ENCODE measurements at regions of chr14 and their contacts with region 1.

Region 1: GRCh38 chr14:67704484-67705089 is 2.9 kb downstream of the RDH12 start:
- DNase-seq: peak; percentile 73 to 74
- ATAC-seq: peak; percentile 93 to 99
- H3K4me3 ChIP-seq: no peak overlapping the region
- H3K27ac ChIP-seq: peak overlapping the region; percentile 19 to 53; a peak in 2 of 6 replicates
- H3K4me1 ChIP-seq: peaks cover 28% of the 10 kb centered on the region
- CTCF ChIP-seq: peak; percentile 94
- EP300 ChIP-seq: no peak
- POLR2A ChIP-seq: no peak
- RAD21 ChIP-seq: peak; percentile 91

Region 2: DNA sequence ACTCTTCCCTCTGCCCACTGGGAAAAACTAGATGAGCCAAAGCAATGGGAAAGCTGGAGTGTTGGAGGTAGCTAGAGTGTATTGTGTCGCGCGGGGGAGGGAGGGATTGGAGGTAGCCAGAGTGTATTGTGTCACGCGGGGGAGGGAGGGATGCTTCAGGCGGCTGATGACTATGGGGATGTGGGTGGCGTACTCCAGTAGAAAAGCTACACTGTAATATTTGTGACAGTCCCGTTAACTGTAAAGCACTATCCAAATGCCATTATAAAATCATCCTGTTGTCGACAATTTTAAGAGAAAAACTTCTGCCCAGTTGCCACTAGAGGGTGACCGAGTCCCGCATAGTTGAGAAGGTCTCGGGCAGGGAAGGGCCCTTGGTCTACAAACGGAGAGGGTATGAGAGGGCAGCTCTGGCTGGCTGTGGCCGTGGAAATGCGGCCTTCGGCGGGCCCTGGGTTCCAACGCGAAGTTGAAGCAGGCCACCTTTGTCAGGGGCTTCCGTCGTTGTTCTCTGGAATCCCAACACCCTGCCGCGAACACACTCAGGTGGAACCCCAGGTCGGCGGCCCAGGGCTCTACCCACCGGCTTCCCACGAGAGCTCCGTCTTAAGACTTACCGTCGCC is 277.5 kb before region 1 on chr14:
- CTCF ChIA-PET with region 1: interaction called, 39 read pairs
- POLR2A ChIA-PET with region 1: no interaction called
- DNase-seq: peak; percentile 85 to 91
- ATAC-seq: peak; percentile 85 to 94
- H3K4me3 ChIP-seq: no peak overlapping the region
- H3K27ac ChIP-seq: peak overlapping the region in 1 of 2 experiments; percentile 35; a peak in 1 of 6 replicates
- H3K4me1 ChIP-seq: peaks cover 9% of the 10 kb centered on the region
- CTCF ChIP-seq: peak; percentile 78
- EP300 ChIP-seq: no peak
- POLR2A ChIP-seq: no peak
- RAD21 ChIP-seq: peak; percentile 86 to 95

Region 3: DNA sequence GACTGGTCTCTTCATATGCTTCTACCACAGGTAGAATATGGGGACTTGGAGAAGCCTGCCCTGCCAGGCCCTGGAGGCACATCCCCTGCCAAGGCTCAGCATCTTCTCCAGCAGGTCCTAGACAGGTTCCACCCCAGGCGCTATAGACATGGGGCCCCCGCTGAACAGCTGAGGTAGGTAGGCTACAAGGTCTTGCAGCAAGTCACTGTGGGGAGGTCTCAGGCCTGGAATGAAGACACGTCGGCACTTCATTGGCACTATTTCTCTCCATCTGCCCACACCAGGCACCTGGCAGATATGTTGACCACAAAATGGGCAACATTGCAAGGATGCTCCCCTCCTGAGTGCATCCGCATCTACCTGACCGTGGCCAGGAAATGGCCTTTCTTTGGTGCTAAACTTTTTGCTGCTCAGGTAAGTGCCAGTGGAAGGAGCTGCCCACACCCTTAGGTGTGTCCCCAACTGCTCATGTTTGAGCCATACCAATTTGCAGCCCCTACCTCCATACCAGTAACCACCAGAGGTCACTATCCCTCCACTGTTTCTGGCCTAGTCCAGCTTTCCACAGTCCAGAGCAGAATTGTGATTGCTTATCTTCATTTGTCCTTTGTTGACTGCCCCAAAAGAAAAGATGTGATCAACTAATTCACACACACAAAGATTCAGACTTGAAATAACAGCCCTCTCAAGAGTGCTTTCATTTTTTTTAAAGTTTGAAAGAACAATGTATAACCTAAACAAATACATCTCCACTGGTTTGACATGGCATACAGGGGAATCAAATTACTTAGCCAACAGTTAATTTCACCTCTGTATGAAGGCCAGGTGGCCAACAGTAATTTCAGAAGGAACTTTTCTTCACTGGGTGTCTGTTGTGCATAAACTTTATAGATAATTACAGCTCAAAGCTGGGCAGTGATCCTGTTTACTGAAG is 120.6 kb before region 1 on chr14:
- CTCF ChIA-PET with region 1: interaction called, 267 read pairs
- POLR2A ChIA-PET with region 1: interaction called, 5 read pairs
- DNase-seq: peak; percentile 56 to 81
- ATAC-seq: peak; percentile 93 to 96
- H3K4me3 ChIP-seq: no peak overlapping the region
- H3K27ac ChIP-seq: no peak overlapping the region
- H3K4me1 ChIP-seq: no peaks in the 10 kb centered on the region
- CTCF ChIP-seq: peak; percentile 80
- EP300 ChIP-seq: no peak
- POLR2A ChIP-seq: no peak
- RAD21 ChIP-seq: peak; percentile 80 to 88

Region 4: DNA sequence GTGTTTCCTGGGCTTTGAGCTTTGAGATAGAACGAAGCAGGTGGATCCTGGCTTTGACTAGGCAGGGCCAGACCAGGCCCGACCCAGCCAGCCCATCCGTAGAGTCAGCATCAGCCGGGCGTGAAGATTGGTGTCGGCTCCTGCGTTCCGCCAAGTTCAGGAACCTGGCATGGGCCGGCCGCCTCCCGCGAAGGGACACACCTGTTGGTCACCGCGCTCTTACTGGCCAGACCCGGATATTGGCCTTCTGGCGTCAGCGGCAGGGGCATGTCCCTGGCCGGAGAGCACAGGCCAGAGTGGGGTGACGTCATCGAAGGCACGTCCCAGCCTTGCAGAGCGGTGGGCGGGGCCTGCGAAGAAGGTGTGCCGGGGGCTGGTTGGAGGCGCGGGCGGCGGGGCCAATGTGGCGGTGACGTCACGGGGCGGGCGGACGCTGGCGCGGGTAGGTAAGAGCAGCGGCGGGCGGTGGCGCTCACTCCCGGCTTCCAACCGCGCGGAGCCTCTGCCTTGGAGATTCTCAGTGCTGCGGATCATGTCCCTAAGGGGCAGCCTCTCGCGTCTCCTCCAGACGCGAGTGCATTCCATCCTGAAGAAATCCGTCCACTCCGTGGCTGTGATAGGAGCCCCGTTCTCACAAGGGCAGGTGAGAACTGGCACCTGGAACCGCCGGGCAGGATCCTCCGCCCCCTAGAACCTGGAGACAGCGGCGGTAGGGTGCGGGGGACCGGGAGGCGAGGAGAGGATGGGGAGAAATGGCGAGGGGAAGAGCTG is 85.0 kb before region 1 on chr14 and contains the start of gene ARG2:
- CTCF ChIA-PET with region 1: interaction called, 74 read pairs
- POLR2A ChIA-PET with region 1: interaction called, 6 read pairs
- DNase-seq: peak; percentile 91 to 96
- ATAC-seq: peak; percentile 91 to 94
- H3K4me3 ChIP-seq: peak within 1 kb of the TSS; percentile 52
- H3K27ac ChIP-seq: peak within 1 kb of the TSS; percentile 31 to 46; a peak in 4 of 6 replicates
- H3K4me1 ChIP-seq: peaks cover 23% of the 10 kb centered on the region
- CTCF ChIP-seq: no peak
- EP300 ChIP-seq: no peak
- POLR2A ChIP-seq: no peak
- RAD21 ChIP-seq: no peak
- polyA plus RNA-seq, gene ARG2: 2.5 TPM in 2 replicates

Region 5: DNA sequence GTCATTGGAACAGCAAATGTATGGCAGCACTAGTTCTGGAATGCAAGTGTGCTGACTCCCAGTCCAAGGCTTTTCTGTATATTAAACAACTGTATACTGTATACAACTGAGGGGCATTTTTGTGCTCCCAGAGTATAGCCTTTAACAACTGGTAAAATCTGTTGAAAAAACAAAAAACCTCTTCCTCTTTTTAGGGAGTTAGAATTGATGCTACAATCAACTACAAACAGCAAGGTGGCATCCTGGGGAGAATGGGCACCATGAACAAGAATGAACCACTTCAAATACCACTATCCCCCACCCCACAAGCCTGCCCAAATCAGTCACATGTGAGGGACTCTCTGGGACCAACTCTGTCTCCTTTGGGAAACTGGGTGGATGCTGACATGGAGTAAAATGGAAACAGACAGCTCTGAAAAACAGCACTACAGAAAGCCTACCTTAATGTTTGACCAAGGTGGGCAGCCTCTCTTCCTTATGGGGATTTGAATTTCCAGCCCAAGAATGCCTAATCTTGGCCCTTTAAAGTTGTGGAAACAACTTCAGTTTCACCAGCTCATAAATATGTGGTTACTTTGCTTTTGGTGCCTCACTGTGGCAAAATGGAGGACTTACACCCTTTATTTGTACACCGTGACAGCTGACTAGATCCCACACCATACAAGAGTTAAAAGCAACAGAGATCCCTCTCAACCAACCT is 37.7 kb before region 1 on chr14:
- CTCF ChIA-PET with region 1: interaction called, 44 read pairs
- POLR2A ChIA-PET with region 1: interaction called, 8 read pairs
- DNase-seq: peak; percentile 43 to 68
- ATAC-seq: peak; percentile 81 to 96
- H3K4me3 ChIP-seq: no peak overlapping the region
- H3K27ac ChIP-seq: no peak overlapping the region
- H3K4me1 ChIP-seq: no peaks in the 10 kb centered on the region
- CTCF ChIP-seq: peak; percentile 82
- EP300 ChIP-seq: no peak
- POLR2A ChIP-seq: no peak
- RAD21 ChIP-seq: peak; percentile 80 to 83

Region 6: DNA sequence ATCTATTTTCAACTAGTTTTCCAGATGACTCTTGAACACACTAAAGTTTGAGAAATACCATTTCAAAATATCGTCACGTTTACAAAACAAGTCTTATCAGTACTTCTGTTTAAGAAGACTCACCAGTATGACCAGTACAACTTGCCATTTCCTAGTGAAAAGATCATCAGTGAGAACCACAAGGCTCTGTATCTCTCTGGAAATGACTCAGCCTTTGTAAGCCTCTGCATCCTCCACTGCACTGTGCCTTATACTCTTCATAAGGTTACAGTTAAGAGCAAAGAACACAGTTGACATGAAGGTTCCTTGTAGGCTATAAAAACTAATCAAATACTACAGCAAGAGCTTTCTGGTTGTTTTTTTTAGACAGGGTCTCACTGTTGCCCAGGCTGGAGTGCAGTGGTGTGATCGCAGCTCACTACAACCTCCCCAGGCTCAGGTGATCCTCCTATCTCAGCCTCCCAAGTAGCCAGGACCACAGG is 24.4 kb before region 1 on chr14:
- CTCF ChIA-PET with region 1: interaction called, 60 read pairs
- POLR2A ChIA-PET with region 1: interaction called, 17 read pairs
- DNase-seq: peak in 1 of 2 experiments; percentile 16
- ATAC-seq: peak; percentile 52 to 60; a peak in 4 of 6 replicates
- H3K4me3 ChIP-seq: no peak overlapping the region
- H3K27ac ChIP-seq: no peak overlapping the region
- H3K4me1 ChIP-seq: peaks cover 21% of the 10 kb centered on the region
- CTCF ChIP-seq: no peak
- EP300 ChIP-seq: no peak
- POLR2A ChIP-seq: no peak
- RAD21 ChIP-seq: no peak

Region 7: GRCh38 chr14:67722293-67722692 is 17.7 kb after region 1 on chr14:
- CTCF ChIA-PET with region 1: interaction called, 44 read pairs
- POLR2A ChIA-PET with region 1: no interaction called
- DNase-seq: no peak
- ATAC-seq: peak in 1 of 2 experiments; percentile 78; a peak in 3 of 6 replicates
- H3K4me3 ChIP-seq: no peak overlapping the region
- H3K27ac ChIP-seq: no peak overlapping the region
- H3K4me1 ChIP-seq: 0 out of 3 replicates have a peak, but pooled peaks cover 4% of the 10 kb centered on the region
- CTCF ChIP-seq: no peak
- EP300 ChIP-seq: no peak
- POLR2A ChIP-seq: no peak
- RAD21 ChIP-seq: no peak